ENCODE measurements at regions of chr1 and their contacts with region 1.

Region 1: DNA sequence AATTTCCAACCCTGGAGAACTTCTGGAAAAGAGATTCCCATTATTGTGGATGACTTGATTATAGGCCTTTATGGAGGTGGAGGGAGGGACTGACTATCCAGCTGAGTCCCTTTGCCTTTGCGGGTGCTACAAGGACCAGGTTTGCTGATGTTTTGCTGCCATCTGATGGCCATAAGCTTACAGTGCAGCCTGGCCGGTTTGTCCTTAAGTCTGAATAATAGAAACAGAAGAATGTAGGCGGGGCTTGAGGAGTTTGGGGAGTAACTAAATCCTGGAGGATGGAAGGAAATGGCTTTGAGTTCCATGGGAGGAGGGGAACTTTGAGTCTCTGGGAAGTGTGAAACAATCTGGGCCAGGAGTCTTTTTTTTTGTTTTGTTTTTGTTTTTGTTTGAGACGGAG is 55.7 kb upstream of the CD1D start:
- DNase-seq: peak; percentile 49
- H3K4me3 Mint-ChIP-seq: no peak overlapping the region
- H3K27ac Mint-ChIP-seq: no peak overlapping the region
- H3K4me1 Mint-ChIP-seq: peaks cover 10% of the 10 kb centered on the region
- H3K27me3 Mint-ChIP-seq: peaks cover 28% of the 10 kb centered on the region

Region 2: GRCh38 chr1:157963713-157964112 is 161.3 kb before region 1 on chr1:
- intact Hi-C with region 1: loop called (anchors 2 kb)
- DNase-seq: peak; percentile 27
- H3K4me3 Mint-ChIP-seq: no peak overlapping the region
- H3K27ac Mint-ChIP-seq: no peak overlapping the region
- H3K4me1 Mint-ChIP-seq: no peaks in the 10 kb centered on the region
- H3K27me3 Mint-ChIP-seq: no peaks in the 10 kb centered on the region

Measured in activated T-helper 2 cell treated with anti-CD3 and anti-CD28 coated beads, Interferon-gamma antibody, Interleukin-2, Interleukin-4, amounts not matched to agents 10 μg/mL and 5 μg/mL and 100 μg/mL, durations not matched to agents 14 hours and 24 hours and 36 hours (primary cell).